MCF 10A (cell line): ENCODE measurements at regions of chr6 and their contacts with region 1.

Region 1: DNA sequence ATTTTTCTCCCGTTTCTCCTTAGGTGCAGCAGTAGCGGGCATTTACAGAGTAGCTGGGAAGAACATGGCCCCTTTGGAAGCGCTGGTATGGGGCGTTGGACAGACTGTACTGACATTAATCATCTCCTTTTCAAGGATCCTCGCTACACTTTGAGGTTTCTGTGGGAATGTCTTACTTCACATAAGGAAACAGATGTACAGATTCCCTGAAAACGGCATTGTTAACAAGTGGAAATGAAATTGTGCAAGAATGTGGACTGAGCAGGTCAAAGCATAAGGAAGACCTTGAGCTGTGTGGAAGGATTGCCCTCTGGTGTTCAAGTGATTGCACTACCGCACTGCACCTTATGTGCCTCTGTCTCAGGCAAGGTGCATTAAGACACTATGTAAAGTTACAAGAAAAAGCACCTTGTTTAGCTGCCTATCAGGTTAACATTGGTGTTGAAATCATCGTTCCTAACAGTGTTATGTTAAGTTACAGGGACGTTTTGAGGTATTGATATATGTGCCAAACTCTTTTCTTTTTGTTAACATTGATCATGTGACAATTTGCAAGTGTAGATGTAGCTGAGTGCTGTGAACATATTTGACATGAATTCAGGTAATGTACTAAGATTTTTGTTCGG is 38.0 kb downstream of the TMEM170B start:
- DNase-seq: peak; percentile 86
- H3K4me3 Mint-ChIP-seq: peak overlapping the region; percentile 12
- H3K27ac Mint-ChIP-seq: no peak overlapping the region
- H3K4me1 Mint-ChIP-seq: no peaks in the 10 kb centered on the region
- H3K27me3 Mint-ChIP-seq: no peaks in the 10 kb centered on the region
- CTCF ChIP-seq: peak; percentile 86

Region 2: GRCh38 chr6:10954590-10955010 is 620.9 kb before region 1 on chr6:
- CTCF ChIA-PET with region 1: interaction called, 5 read pairs
- POLR2A ChIA-PET with region 1: no interaction called
- intact Hi-C with region 1: loop called (anchors 1 kb)
- DNase-seq: peak; percentile 75
- H3K4me3 Mint-ChIP-seq: no peak overlapping the region
- H3K27ac Mint-ChIP-seq: no peak overlapping the region
- H3K4me1 Mint-ChIP-seq: peaks cover 5% of the 10 kb centered on the region
- H3K27me3 Mint-ChIP-seq: no peaks in the 10 kb centered on the region
- CTCF ChIP-seq: peak; percentile 69

Region 3: DNA sequence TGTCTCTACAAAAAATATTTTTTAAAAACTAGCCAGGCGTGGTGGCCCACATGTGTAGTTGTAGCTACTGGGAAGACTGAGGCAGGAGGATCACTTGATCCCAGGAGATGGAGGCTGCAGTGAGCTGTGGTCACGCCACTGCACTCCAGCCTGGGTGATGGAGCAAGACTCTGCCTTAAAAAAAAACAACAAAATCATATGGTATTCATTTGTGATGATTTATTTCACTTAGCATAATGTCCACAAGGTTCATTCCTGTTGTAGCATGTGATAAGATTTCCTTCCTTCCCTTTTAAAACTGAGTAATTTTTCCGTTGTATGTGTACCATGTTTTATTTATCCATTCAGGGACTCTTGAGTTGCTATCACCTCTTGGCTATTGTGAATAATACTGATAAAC is 11.7 kb before region 1 on chr6:
- CTCF ChIA-PET with region 1: interaction called, 19 read pairs
- POLR2A ChIA-PET with region 1: no interaction called
- intact Hi-C with region 1: no loop called
- DNase-seq: no peak
- H3K4me3 Mint-ChIP-seq: no peak overlapping the region
- H3K27ac Mint-ChIP-seq: no peak overlapping the region
- H3K4me1 Mint-ChIP-seq: no peaks in the 10 kb centered on the region
- H3K27me3 Mint-ChIP-seq: no peaks in the 10 kb centered on the region
- CTCF ChIP-seq: no peak

Region 4: DNA sequence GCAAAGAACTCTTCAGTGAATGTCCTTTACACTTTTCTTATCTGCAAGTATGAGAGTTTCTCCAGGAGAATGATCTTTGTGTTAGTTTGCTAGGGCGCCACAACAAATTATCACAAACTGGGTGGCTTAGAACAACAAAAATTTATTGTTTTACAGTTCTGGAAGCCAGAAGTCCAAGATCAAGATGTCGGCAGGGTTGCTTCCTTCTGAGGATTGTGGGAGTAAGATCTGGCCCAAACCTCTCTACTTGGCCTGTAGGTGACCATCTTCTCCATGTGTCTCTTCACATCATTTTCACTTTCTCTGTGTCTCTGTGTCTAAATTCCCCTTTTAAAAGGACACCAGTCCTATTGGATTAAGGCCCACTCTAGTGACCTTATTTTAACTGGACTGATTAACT is 100.1 kb after region 1 on chr6:
- CTCF ChIA-PET with region 1: no interaction called
- POLR2A ChIA-PET with region 1: no interaction called
- intact Hi-C with region 1: no loop called
- DNase-seq: no peak
- H3K4me3 Mint-ChIP-seq: no peak overlapping the region
- H3K27ac Mint-ChIP-seq: no peak overlapping the region
- H3K4me1 Mint-ChIP-seq: no peaks in the 10 kb centered on the region
- H3K27me3 Mint-ChIP-seq: no peaks in the 10 kb centered on the region
- CTCF ChIP-seq: no peak

Region 5: DNA sequence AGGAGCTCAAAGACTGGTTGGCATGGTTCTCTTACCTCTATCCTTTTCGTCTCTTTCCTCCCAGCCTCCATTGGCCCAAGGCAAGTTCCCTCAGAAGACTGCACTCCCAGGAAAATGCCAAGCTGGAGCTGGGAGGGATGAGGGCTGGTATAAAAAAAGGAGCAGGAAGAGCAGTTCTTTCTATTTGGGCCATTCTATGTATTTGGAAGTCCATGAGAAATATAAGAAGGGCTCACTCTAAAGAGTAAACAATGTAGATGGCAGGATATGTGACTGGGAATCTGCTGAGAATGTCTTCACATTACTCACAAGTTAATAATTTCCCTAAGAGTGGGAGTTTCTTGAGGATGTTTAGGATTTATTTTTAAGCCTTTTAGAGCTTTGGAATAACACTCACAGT is 239.7 kb after region 1 on chr6:
- CTCF ChIA-PET with region 1: no interaction called
- POLR2A ChIA-PET with region 1: no interaction called
- intact Hi-C with region 1: no loop called
- DNase-seq: no peak
- H3K4me3 Mint-ChIP-seq: no peak overlapping the region
- H3K27ac Mint-ChIP-seq: no peak overlapping the region
- H3K4me1 Mint-ChIP-seq: peaks cover 7% of the 10 kb centered on the region
- H3K27me3 Mint-ChIP-seq: no peaks in the 10 kb centered on the region
- CTCF ChIP-seq: no peak